B cell (primary cell): ENCODE measurements at regions of chr22 and their contacts with region 1.

Region 1: GRCh38 chr22:23767673-23768548 is at the start of gene CHCHD10:
- DNase-seq: peak; percentile 85
- ATAC-seq: peak; percentile 65
- H3K4me3 ChIP-seq: peak within 1 kb of the TSS; percentile 46 to 87 (median 81)
- H3K4me3 Mint-ChIP-seq: peak within 1 kb of the TSS; percentile 89
- H3K27ac ChIP-seq: peak within 1 kb of the TSS; percentile 80 to 89
- H3K27ac Mint-ChIP-seq: peak within 1 kb of the TSS; percentile 90
- H3K4me1 ChIP-seq: peaks cover 61 to 89% of the 10 kb centered on the region in 2 donors
- H3K4me1 Mint-ChIP-seq: peaks cover 66% of the 10 kb centered on the region
- H3K27me3 ChIP-seq: no peaks in the 10 kb centered on the region
- H3K27me3 Mint-ChIP-seq: no peaks in the 10 kb centered on the region
- CTCF ChIP-seq: peak; percentile 73
- total RNA-seq, gene CHCHD10: 54.0 and 57.2 TPM in 2 replicates

Region 2: DNA sequence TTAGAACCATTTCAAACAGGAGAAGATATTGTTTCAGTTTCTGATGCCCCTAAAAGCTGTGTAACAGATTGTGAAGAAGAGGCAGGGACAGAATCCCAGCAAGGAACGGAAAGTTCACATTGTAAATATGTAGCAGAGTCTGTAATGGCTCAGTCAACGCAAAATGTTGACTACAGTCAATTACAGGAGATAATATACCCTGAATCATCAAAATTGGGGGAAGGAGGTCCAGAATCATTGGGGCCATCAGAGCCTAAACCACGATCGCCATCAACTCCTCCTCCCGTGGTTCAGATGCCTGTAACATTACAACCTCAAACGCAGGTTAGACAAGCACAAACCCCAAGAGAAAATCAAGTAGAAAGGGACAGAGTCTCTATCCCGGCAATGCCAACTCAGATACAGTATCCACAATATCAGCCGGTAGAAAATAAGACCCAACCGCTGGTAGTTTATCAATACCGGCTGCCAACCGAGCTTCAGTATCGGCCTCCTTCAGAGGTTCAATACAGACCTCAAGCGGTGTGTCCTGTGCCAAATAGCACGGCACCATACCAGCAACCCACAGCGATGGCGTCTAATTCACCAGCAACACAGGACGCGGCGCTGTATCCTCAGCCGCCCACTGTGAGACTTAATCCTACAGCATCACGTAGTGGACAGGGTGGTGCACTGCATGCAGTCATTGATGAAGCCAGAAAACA is 228.6 kb before region 1 on chr22:
- CTCF ChIA-PET with region 1: interaction called, 4 read pairs
- POLR2A ChIA-PET with region 1: no interaction called
- intact Hi-C with region 1: loop called (anchors 5 kb)
- DNase-seq: peak; percentile 83
- ATAC-seq: peak; percentile 100
- H3K4me3 ChIP-seq: peak overlapping the region in 1 of 5 experiments; percentile 12
- H3K4me3 Mint-ChIP-seq: peak overlapping the region; percentile 42
- H3K27ac ChIP-seq: no peak overlapping the region
- H3K27ac Mint-ChIP-seq: no peak overlapping the region
- H3K4me1 ChIP-seq: peaks cover 0 to 20% of the 10 kb centered on the region in 2 donors
- H3K4me1 Mint-ChIP-seq: peaks cover 21% of the 10 kb centered on the region
- H3K27me3 ChIP-seq: peaks cover 0 to 2% (median 0%) of the 10 kb centered on the region in 4 experiments
- H3K27me3 Mint-ChIP-seq: no peaks in the 10 kb centered on the region
- CTCF ChIP-seq: peak; percentile 81

Region 3: DNA sequence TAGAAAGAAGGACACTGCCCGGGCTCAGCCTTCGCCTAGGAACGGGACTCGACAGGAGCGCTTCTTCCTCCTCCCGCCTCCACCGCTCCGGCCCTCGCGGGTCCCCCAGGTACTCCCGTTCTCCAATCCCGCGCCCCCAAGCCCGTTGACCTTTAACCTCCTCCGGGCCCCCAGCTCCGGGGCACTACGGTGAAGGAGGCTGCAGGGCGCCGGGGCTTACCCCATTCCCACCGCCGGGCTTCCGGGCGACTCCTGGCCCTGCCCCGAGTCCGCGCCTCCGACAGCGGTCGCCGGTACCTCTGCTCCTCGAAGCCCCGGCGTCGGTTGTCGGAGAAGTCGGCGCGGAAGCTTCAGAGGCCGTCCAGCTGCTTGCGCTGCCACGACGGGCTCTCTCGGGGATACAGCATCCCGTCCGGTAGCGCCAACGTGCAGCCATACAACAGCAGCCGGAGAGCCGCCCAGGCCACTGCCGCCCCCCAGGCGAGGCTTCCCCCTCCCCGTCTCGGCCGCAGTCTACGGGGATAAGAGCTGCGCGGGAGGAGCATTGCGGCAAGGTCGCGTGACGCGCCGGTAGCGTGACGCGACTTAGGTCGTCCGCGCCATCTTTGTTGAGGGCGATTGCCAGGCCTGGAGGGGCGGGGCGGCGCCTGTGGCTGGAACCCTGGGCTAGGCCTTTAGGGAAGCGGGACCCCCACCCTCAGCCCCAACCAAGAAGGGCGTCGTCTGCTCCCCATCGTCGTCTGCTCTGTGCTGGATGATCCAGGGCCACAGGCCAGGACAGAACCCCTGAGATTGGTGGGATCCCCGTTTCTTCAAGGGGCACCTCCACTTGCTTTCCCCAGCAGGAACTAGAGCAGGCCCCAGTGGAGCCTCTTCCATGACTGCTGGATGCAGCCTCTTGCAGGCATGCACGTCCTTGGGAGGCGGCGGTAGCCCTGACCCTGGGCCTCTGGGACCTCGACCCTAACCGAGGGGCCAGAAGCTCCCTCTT is 50.8 kb before region 1 on chr22:
- CTCF ChIA-PET with region 1: interaction called, 3 read pairs
- POLR2A ChIA-PET with region 1: interaction called, 3 read pairs
- intact Hi-C with region 1: loop called (anchors 1 kb)
- DNase-seq: peak; percentile 89
- ATAC-seq: peak; percentile 95
- H3K4me3 ChIP-seq: peak overlapping the region in 4 of 5 experiments; percentile 82 to 88 (median 88)
- H3K4me3 Mint-ChIP-seq: peak overlapping the region; percentile 89
- H3K27ac ChIP-seq: peak overlapping the region; percentile 61 to 84
- H3K27ac Mint-ChIP-seq: peak overlapping the region; percentile 89
- H3K4me1 ChIP-seq: peaks cover 13 to 19% of the 10 kb centered on the region in 2 donors
- H3K4me1 Mint-ChIP-seq: peaks cover 20% of the 10 kb centered on the region
- H3K27me3 ChIP-seq: no peaks in the 10 kb centered on the region
- H3K27me3 Mint-ChIP-seq: no peaks in the 10 kb centered on the region
- CTCF ChIP-seq: no peak

Region 4: DNA sequence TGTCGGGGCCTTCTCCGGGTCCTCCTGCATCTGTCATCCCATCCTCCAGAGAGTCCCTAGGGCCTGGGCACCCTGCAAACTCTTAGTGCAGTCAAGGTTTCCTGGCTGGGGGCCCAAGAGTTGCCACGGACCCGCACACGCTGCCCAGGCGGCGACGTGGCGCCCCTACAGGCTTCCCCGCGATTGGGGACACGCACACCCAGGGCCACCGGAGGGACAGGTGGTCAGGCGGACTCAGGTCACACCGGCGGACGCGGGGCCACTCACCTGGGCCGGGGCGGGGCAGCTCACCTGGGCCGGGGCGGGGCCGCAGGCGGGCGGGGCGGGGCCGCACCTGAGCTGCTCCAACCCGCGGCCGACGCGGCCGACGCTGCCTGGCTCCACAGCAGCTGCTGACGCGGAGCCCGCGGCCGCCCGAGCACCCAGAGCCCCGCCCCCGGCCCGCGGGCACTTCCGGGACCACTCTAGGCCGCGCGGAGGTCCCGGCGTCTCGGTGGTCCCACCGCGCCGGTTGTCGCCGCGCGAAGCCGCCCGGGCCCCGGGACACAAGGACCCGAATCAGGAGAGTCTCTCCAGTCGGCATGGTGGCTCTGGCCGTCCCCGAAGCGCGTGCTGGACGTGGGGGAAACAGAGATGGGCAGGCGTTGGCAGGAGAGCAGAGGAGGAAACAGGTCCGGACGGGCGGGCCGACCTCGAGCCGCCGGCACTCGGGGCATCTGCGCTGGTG is 17.0 kb before region 1 on chr22 and contains the start of gene ZNF70:
- CTCF ChIA-PET with region 1: interaction called, 188 read pairs
- POLR2A ChIA-PET with region 1: interaction called, 174 read pairs
- intact Hi-C with region 1: loop called (anchors 1 kb)
- DNase-seq: peak; percentile 92
- ATAC-seq: peak; percentile 56
- H3K4me3 ChIP-seq: peak within 1 kb of the TSS; percentile 6 to 88 (median 83)
- H3K4me3 Mint-ChIP-seq: peak within 1 kb of the TSS; percentile 93
- H3K27ac ChIP-seq: peak within 1 kb of the TSS; percentile 85 to 98
- H3K27ac Mint-ChIP-seq: peak within 1 kb of the TSS; percentile 99
- H3K4me1 ChIP-seq: peaks cover 24 to 53% of the 10 kb centered on the region in 2 donors
- H3K4me1 Mint-ChIP-seq: peaks cover 55% of the 10 kb centered on the region
- H3K27me3 ChIP-seq: no peaks in the 10 kb centered on the region
- H3K27me3 Mint-ChIP-seq: no peaks in the 10 kb centered on the region
- CTCF ChIP-seq: no peak
- total RNA-seq, gene ZNF70: 8.3 and 9.6 TPM in 2 replicates

Region 5: GRCh38 chr22:23800297-23801237 is 32.7 kb after region 1 on chr22:
- CTCF ChIA-PET with region 1: interaction called, 6 read pairs
- POLR2A ChIA-PET with region 1: interaction called, 26 read pairs
- intact Hi-C with region 1: loop called (anchors 2 kb)
- DNase-seq: peak; percentile 89
- ATAC-seq: peak; percentile 70
- H3K4me3 ChIP-seq: peak overlapping the region in 4 of 5 experiments; percentile 0 to 44 (median 4)
- H3K4me3 Mint-ChIP-seq: peak overlapping the region; percentile 81
- H3K27ac ChIP-seq: peak overlapping the region; percentile 92 to 93
- H3K27ac Mint-ChIP-seq: peak overlapping the region; percentile 96
- H3K4me1 ChIP-seq: peaks cover 63 to 76% of the 10 kb centered on the region in 2 donors
- H3K4me1 Mint-ChIP-seq: peaks cover 70% of the 10 kb centered on the region
- H3K27me3 ChIP-seq: no peaks in the 10 kb centered on the region
- H3K27me3 Mint-ChIP-seq: no peaks in the 10 kb centered on the region
- CTCF ChIP-seq: no peak

Region 6: GRCh38 chr22:23838681-23839468 is 71.0 kb after region 1 on chr22 and contains the start of gene DERL3:
- CTCF ChIA-PET with region 1: interaction called, 183 read pairs
- POLR2A ChIA-PET with region 1: interaction called, 12 read pairs
- intact Hi-C with region 1: loop called (anchors 2 kb)
- DNase-seq: peak; percentile 100
- ATAC-seq: peak; percentile 78
- H3K4me3 ChIP-seq: peak within 1 kb of the TSS; percentile 38 to 83 (median 69)
- H3K4me3 Mint-ChIP-seq: peak within 1 kb of the TSS; percentile 89
- H3K27ac ChIP-seq: peak within 1 kb of the TSS; percentile 98
- H3K27ac Mint-ChIP-seq: peak within 1 kb of the TSS; percentile 99
- H3K4me1 ChIP-seq: peaks cover 45 to 60% of the 10 kb centered on the region in 2 donors
- H3K4me1 Mint-ChIP-seq: peaks cover 73% of the 10 kb centered on the region
- H3K27me3 ChIP-seq: no peaks in the 10 kb centered on the region
- H3K27me3 Mint-ChIP-seq: no peaks in the 10 kb centered on the region
- CTCF ChIP-seq: no peak
- total RNA-seq, gene DERL3: 74.1 and 77.0 TPM in 2 replicates

Region 7: DNA sequence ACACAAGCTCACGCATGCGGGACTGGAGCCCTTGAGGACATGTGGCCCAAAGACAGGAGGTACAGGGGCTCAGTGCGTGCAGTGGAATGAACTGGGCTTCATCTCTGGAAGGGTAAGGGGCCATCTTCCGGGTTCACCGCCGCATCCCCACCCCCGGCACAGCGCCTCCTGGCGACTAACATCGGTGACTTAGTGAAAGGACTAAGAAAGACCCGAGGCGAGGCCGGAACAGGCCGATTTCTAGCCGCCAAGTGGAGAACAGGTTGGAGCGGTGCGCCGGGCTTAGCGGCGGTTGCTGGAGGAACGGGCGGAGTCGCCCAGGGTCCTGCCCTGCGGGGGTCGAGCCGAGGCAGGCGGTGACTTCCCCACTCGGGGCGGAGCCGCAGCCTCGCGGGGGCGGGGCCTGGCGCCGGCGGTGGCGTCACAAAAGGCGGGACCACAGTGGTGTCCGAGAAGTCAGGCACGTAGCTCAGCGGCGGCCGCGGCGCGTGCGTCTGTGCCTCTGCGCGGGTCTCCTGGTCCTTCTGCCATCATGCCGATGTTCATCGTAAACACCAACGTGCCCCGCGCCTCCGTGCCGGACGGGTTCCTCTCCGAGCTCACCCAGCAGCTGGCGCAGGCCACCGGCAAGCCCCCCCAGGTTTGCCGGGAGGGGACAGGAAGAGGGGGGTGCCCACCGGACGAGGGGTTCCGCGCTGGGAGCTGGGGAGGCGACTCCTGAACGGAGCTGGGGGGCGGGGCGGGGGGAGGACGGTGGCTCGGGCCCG is 126.2 kb after region 1 on chr22 and contains the start of gene MIF:
- CTCF ChIA-PET with region 1: interaction called, 6 read pairs
- POLR2A ChIA-PET with region 1: interaction called, 5 read pairs
- intact Hi-C with region 1: loop called (anchors 1 kb)
- DNase-seq: peak; percentile 96
- ATAC-seq: peak; percentile 92
- H3K4me3 ChIP-seq: peak within 1 kb of the TSS; percentile 26 to 88 (median 84)
- H3K4me3 Mint-ChIP-seq: peak within 1 kb of the TSS; percentile 93
- H3K27ac ChIP-seq: peak within 1 kb of the TSS; percentile 87 to 89
- H3K27ac Mint-ChIP-seq: peak within 1 kb of the TSS; percentile 98
- H3K4me1 ChIP-seq: peaks cover 13 to 19% of the 10 kb centered on the region in 2 donors
- H3K4me1 Mint-ChIP-seq: peaks cover 28% of the 10 kb centered on the region
- H3K27me3 ChIP-seq: no peaks in the 10 kb centered on the region
- H3K27me3 Mint-ChIP-seq: no peaks in the 10 kb centered on the region
- CTCF ChIP-seq: peak; percentile 76
- total RNA-seq, gene MIF: 125 and 143 TPM in 2 replicates